BJ (cell line): ENCODE measurements at regions of chr4 and their contacts with region 1.

Region 1: DNA sequence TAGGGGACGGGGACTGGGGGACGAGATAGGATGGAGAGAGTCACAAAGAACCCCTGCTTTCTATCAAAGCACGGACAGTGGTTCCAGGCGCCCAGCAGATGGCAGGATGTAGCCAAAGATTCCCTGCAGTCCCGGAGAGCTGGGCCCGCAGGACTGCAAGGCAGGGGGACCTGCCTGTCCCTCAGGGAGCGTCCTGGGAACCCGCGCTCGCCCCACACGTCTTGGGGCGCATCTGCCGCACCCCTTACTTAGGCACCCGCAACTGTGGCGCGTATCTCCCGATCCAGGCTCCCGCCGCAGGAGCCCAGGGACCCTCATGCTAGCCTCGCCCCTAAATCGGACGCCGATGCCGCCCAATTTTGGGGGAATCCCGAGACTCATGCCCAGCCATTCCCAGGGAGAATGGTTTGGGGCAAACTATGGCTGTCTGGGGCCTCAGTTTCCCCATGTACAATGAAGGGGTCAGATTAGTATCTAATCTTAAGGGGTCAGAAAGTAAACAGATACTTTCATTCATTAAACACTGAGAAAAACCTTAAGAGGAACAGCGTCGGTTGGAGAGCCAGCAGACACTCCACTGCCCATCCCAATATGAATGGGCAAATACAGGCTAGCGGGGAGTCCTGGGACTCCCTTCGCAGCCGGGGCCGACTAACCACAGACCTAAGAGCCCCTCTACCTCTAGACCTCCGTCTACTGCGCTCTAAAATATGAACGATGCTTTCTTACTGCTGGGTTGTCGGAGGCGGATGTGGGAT is 581 bp upstream of the STK32B start:
- DNase-seq: no peak
- H3K4me3 ChIP-seq: peak overlapping the region; percentile 55
- H3K27me3 ChIP-seq: no peaks in the 10 kb centered on the region; the same call in 1 of the 2 replicates
- CTCF ChIP-seq: peak; percentile 83

Region 2: GRCh38 chr4:5037553-5038551 is 12.8 kb before region 1 on chr4:
- CTCF ChIA-PET with region 1: interaction called, 13 read pairs
- POLR2A ChIA-PET with region 1: no interaction called
- DNase-seq: peak; percentile 95
- H3K4me3 ChIP-seq: no peak overlapping the region
- H3K27me3 ChIP-seq: no peaks in the 10 kb centered on the region
- CTCF ChIP-seq: no peak

Region 3: DNA sequence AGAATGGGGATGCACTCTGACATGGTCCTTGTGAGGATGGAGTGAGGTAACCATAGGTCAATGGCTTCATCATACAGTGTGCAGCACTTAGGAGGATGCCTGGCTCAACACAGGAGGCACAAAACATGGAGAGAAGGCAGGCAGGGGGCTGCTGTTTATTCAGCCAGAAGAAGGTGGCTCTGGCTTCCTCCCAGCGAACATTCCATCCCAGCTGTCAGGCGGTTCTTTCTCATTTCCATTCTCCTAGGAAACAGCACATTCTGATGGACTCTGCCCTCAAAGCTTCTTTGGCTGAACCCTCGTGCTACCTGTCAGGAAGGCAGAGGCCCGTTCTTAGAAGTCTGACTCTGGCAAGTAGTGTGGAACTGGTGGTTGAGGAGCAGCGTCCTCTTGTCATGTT is 19.2 kb after region 1 on chr4:
- CTCF ChIA-PET with region 1: interaction called, 11 read pairs
- POLR2A ChIA-PET with region 1: no interaction called
- DNase-seq: no peak
- H3K4me3 ChIP-seq: no peak overlapping the region
- H3K27me3 ChIP-seq: no peaks in the 10 kb centered on the region
- CTCF ChIP-seq: no peak

Region 4: GRCh38 chr4:5511791-5512190 is 461.1 kb after region 1 on chr4:
- CTCF ChIA-PET with region 1: no interaction called
- POLR2A ChIA-PET with region 1: no interaction called
- DNase-seq: no peak
- H3K4me3 ChIP-seq: no peak overlapping the region
- H3K27me3 ChIP-seq: no peaks in the 10 kb centered on the region
- CTCF ChIP-seq: no peak